ENCODE measurements at regions of chr11 and their contacts with region 1.

Region 1: GRCh38 chr11:82718307-82718706 is 15.4 kb downstream of the FAM181B start:
- DNase-seq: no peak
- ATAC-seq: peak; percentile 75
- H3K4me3 ChIP-seq: no peak overlapping the region
- H3K27ac ChIP-seq: no peak overlapping the region
- H3K4me1 ChIP-seq: no peaks in the 10 kb centered on the region
- H3K27me3 ChIP-seq: no peaks in the 10 kb centered on the region
- CTCF ChIP-seq: peak; percentile 72 to 75 (median 73)
- EP300 ChIP-seq: no peak
- POLR2A ChIP-seq: no peak
- RAD21 ChIP-seq: peak; percentile 76

Region 2: GRCh38 chr11:82523141-82523540 is 195.2 kb before region 1 on chr11:
- CTCF ChIA-PET with region 1: no interaction called
- POLR2A ChIA-PET with region 1: no interaction called
- RAD21 ChIA-PET with region 1: no interaction called
- SMC1A ChIA-PET with region 1: no interaction called
- in situ Hi-C with region 1: no loop called
- intact Hi-C with region 1: no loop called
- DNase-seq: no peak
- ATAC-seq: no peak
- H3K4me3 ChIP-seq: no peak overlapping the region
- H3K27ac ChIP-seq: no peak overlapping the region
- H3K4me1 ChIP-seq: no peaks in the 10 kb centered on the region
- H3K27me3 ChIP-seq: no peaks in the 10 kb centered on the region
- CTCF ChIP-seq: no peak
- EP300 ChIP-seq: no peak
- POLR2A ChIP-seq: no peak
- RAD21 ChIP-seq: no peak

Region 3: DNA sequence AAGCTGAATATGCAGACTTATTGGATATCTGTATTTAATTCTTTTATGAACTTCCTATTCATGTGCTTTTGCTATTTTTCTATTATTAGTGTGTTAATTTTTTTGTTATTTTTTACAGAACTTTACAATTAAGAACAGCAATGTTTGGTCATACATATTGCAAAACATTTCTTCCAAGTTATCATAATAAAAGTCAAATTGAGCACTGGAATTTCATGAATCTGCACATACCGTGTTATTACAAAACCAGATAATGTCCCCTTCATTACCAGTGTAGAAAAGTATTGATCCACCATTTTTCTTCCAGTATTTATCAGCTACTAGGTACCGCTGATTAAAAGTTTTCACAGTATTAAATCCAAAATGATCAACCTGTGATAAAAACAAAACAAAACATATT is 141.4 kb after region 1 on chr11:
- CTCF ChIA-PET with region 1: interaction called, 18 read pairs
- POLR2A ChIA-PET with region 1: no interaction called
- RAD21 ChIA-PET with region 1: no interaction called
- SMC1A ChIA-PET with region 1: interaction called, 6 read pairs
- in situ Hi-C with region 1: no loop called
- intact Hi-C with region 1: loop called (anchors 1 kb)
- DNase-seq: no peak
- ATAC-seq: no peak
- H3K4me3 ChIP-seq: no peak overlapping the region
- H3K27ac ChIP-seq: no peak overlapping the region
- H3K4me1 ChIP-seq: peaks cover 7% of the 10 kb centered on the region
- H3K27me3 ChIP-seq: no peaks in the 10 kb centered on the region
- CTCF ChIP-seq: no peak
- EP300 ChIP-seq: no peak
- POLR2A ChIP-seq: no peak
- RAD21 ChIP-seq: no peak

Region 4: GRCh38 chr11:82907371-82907770 is 189.1 kb after region 1 on chr11:
- CTCF ChIA-PET with region 1: no interaction called
- POLR2A ChIA-PET with region 1: no interaction called
- RAD21 ChIA-PET with region 1: no interaction called
- SMC1A ChIA-PET with region 1: no interaction called
- in situ Hi-C with region 1: no loop called
- intact Hi-C with region 1: no loop called
- DNase-seq: no peak
- ATAC-seq: no peak
- H3K4me3 ChIP-seq: no peak overlapping the region
- H3K27ac ChIP-seq: no peak overlapping the region
- H3K4me1 ChIP-seq: peaks cover 15% of the 10 kb centered on the region; the same call in 1 of the 2 replicates
- H3K27me3 ChIP-seq: no peaks in the 10 kb centered on the region
- CTCF ChIP-seq: no peak
- EP300 ChIP-seq: no peak
- POLR2A ChIP-seq: no peak
- RAD21 ChIP-seq: no peak

Measured in GM12878 (cell line).